Lower lobe of right lung (tissue), 2 donors: ENCODE measurements at regions of chr6 and their contacts with region 1.

Region 1: GRCh38 chr6:110958329-110959192 is at the start of gene GTF3C6:
- DNase-seq: peak; percentile 98
- ATAC-seq: peak; percentile 99 to 100
- H3K4me3 ChIP-seq: peak within 1 kb of the TSS; percentile 83
- H3K27ac ChIP-seq: peak within 1 kb of the TSS; percentile 95
- H3K4me1 ChIP-seq: peaks cover 15% of the 10 kb centered on the region
- H3K27me3 ChIP-seq: no peaks in the 10 kb centered on the region
- CTCF ChIP-seq: no peak
- total RNA-seq, gene GTF3C6: 46.1 TPM

Region 2: GRCh38 chr6:110682460-110682853 is 276.1 kb before region 1 on chr6:
- intact Hi-C with region 1: loop called (anchors 10 kb)
- DNase-seq: no peak
- ATAC-seq: peak; percentile 94 to 97
- H3K4me3 ChIP-seq: no peak overlapping the region
- H3K27ac ChIP-seq: no peak overlapping the region
- H3K4me1 ChIP-seq: peaks cover 7% of the 10 kb centered on the region
- H3K27me3 ChIP-seq: no peaks in the 10 kb centered on the region
- CTCF ChIP-seq: peak; percentile 74

Region 3: DNA sequence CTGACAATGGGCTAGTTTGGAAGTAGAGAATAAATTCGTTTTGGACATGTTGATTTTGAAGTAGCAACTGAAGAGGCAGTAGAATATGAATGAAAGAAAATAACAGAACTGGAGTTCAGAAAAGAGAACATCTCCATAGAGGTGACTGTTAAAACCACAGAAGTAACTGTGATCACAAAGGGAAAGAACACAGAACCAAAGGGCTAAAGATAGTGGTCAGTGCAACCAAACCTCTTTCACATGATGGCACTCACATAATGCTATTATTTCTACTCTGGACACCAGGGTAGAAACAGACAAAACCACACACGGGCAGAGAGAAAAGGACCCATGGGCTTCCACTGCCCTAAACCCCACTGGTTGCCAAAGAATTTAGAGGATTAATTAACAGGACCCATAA is 201.7 kb before region 1 on chr6:
- intact Hi-C with region 1: no loop called
- DNase-seq: no peak
- ATAC-seq: no peak
- H3K4me3 ChIP-seq: no peak overlapping the region
- H3K27ac ChIP-seq: no peak overlapping the region
- H3K4me1 ChIP-seq: no peaks in the 10 kb centered on the region
- H3K27me3 ChIP-seq: no peaks in the 10 kb centered on the region
- CTCF ChIP-seq: no peak